Left ventricle myocardium superior (tissue), 1 donor: ENCODE measurements at regions of chr11 and their contacts with region 1.

Region 1: GRCh38 chr11:31240338-31240904 is 129.1 kb downstream of the DCDC1 start:
- DNase-seq: no peak
- ATAC-seq: no peak

Region 2: DNA sequence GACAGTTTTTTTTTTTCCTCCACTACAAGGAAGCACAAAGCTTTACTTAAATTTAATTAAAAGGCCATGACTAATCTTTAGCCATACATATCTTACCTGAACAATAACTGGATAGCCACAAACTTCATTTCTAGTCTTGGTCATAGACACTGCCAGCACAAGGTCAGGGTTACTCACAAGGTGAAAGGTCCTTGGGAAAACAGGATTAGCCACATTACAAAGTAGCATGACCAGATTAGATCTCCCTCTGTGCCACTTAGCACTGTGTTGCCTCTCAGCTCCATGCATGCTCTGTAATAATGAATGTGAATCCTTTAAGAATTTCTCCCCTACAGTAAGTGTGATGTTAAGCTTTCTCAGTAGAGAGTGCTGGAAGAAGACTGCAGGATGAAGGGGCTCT is 329.2 kb before region 1 on chr11:
- intact Hi-C with region 1: no loop called
- DNase-seq: no peak
- ATAC-seq: no peak

Region 3: GRCh38 chr11:31968461-31969358 is 728.3 kb after region 1 on chr11:
- intact Hi-C with region 1: loop called (anchors 10 kb)
- DNase-seq: peak; percentile 33
- ATAC-seq: peak; percentile 82